ENCODE measurements at regions of chr18 and their contacts with region 1.

Region 1: DNA sequence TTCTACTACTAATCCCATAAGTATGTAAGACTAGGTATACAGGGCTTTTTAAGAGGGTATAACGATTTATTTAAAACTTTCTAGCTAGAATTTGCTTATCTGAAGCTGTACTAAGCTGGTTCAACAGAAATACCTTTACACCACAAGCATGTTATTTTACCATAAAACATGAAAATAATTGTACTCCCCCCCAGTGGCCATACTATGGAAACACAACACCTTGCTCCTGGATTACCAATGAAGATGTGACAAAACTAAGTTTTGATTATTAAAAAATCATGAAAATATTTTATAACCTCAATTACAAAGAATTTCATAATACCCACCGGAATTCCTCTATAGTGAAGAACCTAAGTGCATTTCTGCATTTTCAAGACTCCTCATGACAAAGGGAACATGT is 27.3 kb downstream of the LPIN2 start:
- DNase-seq: peak in 7 of 9 donors; percentile 56 to 75 (median 66)
- ATAC-seq: peak; percentile 79
- H3K4me3 ChIP-seq: no peak overlapping the region
- H3K4me3 Mint-ChIP-seq: peak overlapping the region in 1 of 10 donors; percentile 27
- H3K27ac ChIP-seq: no peak overlapping the region
- H3K27ac Mint-ChIP-seq: peak overlapping the region in 7 of 9 donors; percentile 0 to 98 (median 67)
- H3K4me1 ChIP-seq: peaks cover 19 to 41% of the 10 kb centered on the region in 2 donors
- H3K4me1 Mint-ChIP-seq: peaks cover 34 to 80% (median 73%) of the 10 kb centered on the region in 7 donors
- H3K27me3 ChIP-seq: no peaks in the 10 kb centered on the region
- H3K27me3 Mint-ChIP-seq: no peaks in the 10 kb centered on the region

Region 2: GRCh38 chr18:1846640-1847039 is 1139.0 kb before region 1 on chr18:
- CTCF ChIA-PET with region 1: no interaction called
- POLR2A ChIA-PET with region 1: no interaction called
- intact Hi-C with region 1: no loop called
- DNase-seq: no peak
- ATAC-seq: no peak
- H3K4me3 ChIP-seq: no peak overlapping the region
- H3K4me3 Mint-ChIP-seq: no peak overlapping the region
- H3K27ac ChIP-seq: no peak overlapping the region
- H3K27ac Mint-ChIP-seq: no peak overlapping the region
- H3K4me1 ChIP-seq: no peaks in the 10 kb centered on the region
- H3K4me1 Mint-ChIP-seq: peaks cover 0 to 3% (median 0%) of the 10 kb centered on the region in 7 donors
- H3K27me3 ChIP-seq: no peaks in the 10 kb centered on the region
- H3K27me3 Mint-ChIP-seq: peaks cover 0 to 20% (median 7%) of the 10 kb centered on the region in 5 donors

Region 3: DNA sequence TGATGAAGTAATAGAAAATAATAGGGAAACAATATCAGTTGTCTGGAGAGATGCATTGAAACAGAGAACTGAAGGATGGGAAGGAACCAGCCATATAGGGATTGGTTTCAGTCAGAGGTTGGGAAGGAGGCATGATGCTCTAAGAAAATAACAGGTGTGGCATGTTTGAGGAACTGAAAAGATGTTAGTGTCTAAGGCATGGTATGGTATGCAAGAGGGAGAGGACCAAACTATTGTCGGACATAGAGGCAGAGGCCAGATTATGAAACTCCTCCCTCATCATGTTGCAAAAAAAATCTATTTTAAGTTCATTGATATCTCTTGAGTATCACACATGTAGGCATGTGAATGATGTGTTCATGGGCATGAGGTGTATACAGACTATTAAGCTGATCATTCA is 187.7 kb before region 1 on chr18:
- CTCF ChIA-PET with region 1: no interaction called
- POLR2A ChIA-PET with region 1: no interaction called
- intact Hi-C with region 1: loop called in 1 of 2 experiments (anchors 5 kb)
- DNase-seq: no peak
- ATAC-seq: no peak
- H3K4me3 ChIP-seq: no peak overlapping the region
- H3K4me3 Mint-ChIP-seq: no peak overlapping the region
- H3K27ac ChIP-seq: no peak overlapping the region
- H3K27ac Mint-ChIP-seq: peak overlapping the region in 3 of 9 donors; percentile 6 to 48 (median 41)
- H3K4me1 ChIP-seq: no peaks in the 10 kb centered on the region
- H3K4me1 Mint-ChIP-seq: peaks cover 3 to 21% (median 9%) of the 10 kb centered on the region in 7 donors
- H3K27me3 ChIP-seq: no peaks in the 10 kb centered on the region
- H3K27me3 Mint-ChIP-seq: no peaks in the 10 kb centered on the region

Region 4: DNA sequence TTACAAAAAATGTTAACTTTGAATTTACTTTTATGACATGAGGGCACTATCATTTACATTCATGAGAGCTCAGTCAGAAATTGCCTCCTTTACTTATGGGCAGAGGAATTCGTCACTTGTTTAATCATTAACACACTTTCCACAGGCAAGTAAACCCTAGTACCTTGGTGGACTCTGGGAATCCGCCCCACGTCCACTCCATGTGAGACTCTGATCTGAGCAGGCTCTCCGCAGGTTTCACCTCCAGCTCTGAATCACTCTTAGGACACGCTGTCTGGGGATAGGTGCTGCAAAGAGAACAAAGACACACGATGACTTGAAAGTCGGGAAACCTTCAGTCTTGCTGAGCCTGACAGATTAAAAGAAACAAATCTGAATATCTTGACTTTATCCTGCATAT is 46.3 kb before region 1 on chr18:
- CTCF ChIA-PET with region 1: interaction called, 150 read pairs
- POLR2A ChIA-PET with region 1: interaction called, 29 read pairs
- intact Hi-C with region 1: no loop called
- DNase-seq: no peak
- ATAC-seq: no peak
- H3K4me3 ChIP-seq: no peak overlapping the region
- H3K4me3 Mint-ChIP-seq: no peak overlapping the region
- H3K27ac ChIP-seq: no peak overlapping the region
- H3K27ac Mint-ChIP-seq: peak overlapping the region in 5 of 9 donors; percentile 48 to 75 (median 64)
- H3K4me1 ChIP-seq: no peaks in the 10 kb centered on the region
- H3K4me1 Mint-ChIP-seq: peaks cover 8 to 56% (median 33%) of the 10 kb centered on the region in 7 donors
- H3K27me3 ChIP-seq: no peaks in the 10 kb centered on the region
- H3K27me3 Mint-ChIP-seq: no peaks in the 10 kb centered on the region

Region 5: GRCh38 chr18:2971741-2972552 is 13.7 kb before region 1 on chr18:
- CTCF ChIA-PET with region 1: interaction called, 75 read pairs
- POLR2A ChIA-PET with region 1: interaction called, 84 read pairs
- intact Hi-C with region 1: loop called (anchors 1 kb)
- DNase-seq: peak in 7 of 9 donors; percentile 40 to 80 (median 62)
- ATAC-seq: peak; percentile 84
- H3K4me3 ChIP-seq: peak overlapping the region; percentile 45
- H3K4me3 Mint-ChIP-seq: peak overlapping the region; percentile 75 to 93 (median 88)
- H3K27ac ChIP-seq: peak overlapping the region; percentile 76
- H3K27ac Mint-ChIP-seq: peak overlapping the region; percentile 90 to 99 (median 96)
- H3K4me1 ChIP-seq: peaks cover 75 to 82% of the 10 kb centered on the region in 2 donors
- H3K4me1 Mint-ChIP-seq: peaks cover 63 to 97% (median 93%) of the 10 kb centered on the region in 7 donors
- H3K27me3 ChIP-seq: no peaks in the 10 kb centered on the region
- H3K27me3 Mint-ChIP-seq: no peaks in the 10 kb centered on the region

Region 6: GRCh38 chr18:3029215-3029952 is 43.8 kb after region 1 on chr18:
- CTCF ChIA-PET with region 1: no interaction called
- POLR2A ChIA-PET with region 1: no interaction called
- intact Hi-C with region 1: no loop called
- DNase-seq: no peak
- ATAC-seq: no peak
- H3K4me3 ChIP-seq: no peak overlapping the region
- H3K4me3 Mint-ChIP-seq: peak overlapping the region in 1 of 10 donors; percentile 3
- H3K27ac ChIP-seq: no peak overlapping the region
- H3K27ac Mint-ChIP-seq: peak overlapping the region in 1 of 9 donors; percentile 51
- H3K4me1 ChIP-seq: no peaks in the 10 kb centered on the region
- H3K4me1 Mint-ChIP-seq: peaks cover 0 to 15% (median 8%) of the 10 kb centered on the region in 7 donors
- H3K27me3 ChIP-seq: no peaks in the 10 kb centered on the region
- H3K27me3 Mint-ChIP-seq: no peaks in the 10 kb centered on the region